ENCODE measurements at regions of chr5 and their contacts with region 1.

Region 1: DNA sequence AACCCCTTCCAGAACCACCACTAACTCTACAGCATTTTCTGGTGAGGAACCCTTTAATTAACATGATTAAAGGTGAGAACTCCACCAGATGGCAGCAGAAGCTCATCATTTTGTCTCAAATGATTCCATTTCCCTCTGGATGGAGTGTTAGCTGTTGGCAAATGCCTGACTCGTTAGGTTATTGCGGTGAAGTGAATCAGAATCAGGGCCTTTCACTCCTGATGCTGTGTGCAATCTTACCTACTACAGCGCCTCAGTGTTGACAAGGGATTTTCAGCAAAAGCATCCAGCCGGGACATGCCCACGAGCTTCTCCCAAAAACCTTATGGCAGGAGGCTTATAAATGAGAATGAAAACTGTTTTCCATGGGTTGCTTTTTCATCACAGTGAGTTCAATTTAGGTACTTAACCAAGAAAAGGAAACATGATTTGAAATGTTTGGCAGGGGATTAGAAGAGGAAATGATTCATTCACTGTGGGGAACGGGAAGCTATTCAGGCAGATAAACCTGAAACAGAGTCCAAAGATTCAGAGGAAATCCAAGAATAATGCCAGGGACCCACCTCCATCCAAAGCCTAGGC is 48.0 kb upstream of the CAST start:
- DNase-seq: peak; percentile 51
- CTCF ChIP-seq: peak; percentile 57

Region 2: DNA sequence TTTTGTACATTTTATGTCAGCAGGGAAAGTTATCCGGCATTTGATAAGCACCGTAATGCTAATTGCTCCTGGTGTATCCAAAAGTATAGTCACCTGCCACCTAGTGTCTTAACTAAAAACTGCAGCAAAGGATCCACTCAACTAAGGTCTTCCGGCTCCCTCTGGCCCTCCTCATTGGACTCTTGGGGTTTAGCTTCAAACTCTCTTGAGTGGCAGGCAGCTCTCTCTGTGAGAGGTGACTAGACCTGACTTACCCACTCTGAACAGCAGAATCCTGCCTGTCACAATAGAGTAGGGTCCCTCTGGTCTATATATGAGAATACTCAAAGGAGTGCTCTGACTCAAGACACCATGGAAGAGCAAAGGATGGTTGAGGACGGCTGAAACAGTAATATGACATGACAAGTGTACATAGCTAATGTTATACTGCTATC is 12.4 kb before region 1 on chr5:
- CTCF ChIA-PET with region 1: interaction called, 64 read pairs
- POLR2A ChIA-PET with region 1: no interaction called
- DNase-seq: peak; percentile 66
- CTCF ChIP-seq: peak; percentile 73

Region 3: GRCh38 chr5:96626956-96627355 is 12.8 kb after region 1 on chr5:
- CTCF ChIA-PET with region 1: interaction called, 24 read pairs
- POLR2A ChIA-PET with region 1: no interaction called
- DNase-seq: no peak
- CTCF ChIP-seq: no peak

Region 4: GRCh38 chr5:96687812-96688453 is 73.7 kb after region 1 on chr5:
- CTCF ChIA-PET with region 1: interaction called, 23 read pairs
- POLR2A ChIA-PET with region 1: no interaction called
- DNase-seq: peak; percentile 46
- CTCF ChIP-seq: peak; percentile 54

Region 5: GRCh38 chr5:96771395-96771794 is 157.2 kb after region 1 on chr5:
- CTCF ChIA-PET with region 1: no interaction called
- POLR2A ChIA-PET with region 1: interaction called, 10 read pairs
- DNase-seq: no peak
- CTCF ChIP-seq: no peak

Region 6: GRCh38 chr5:97142521-97143254 is 528.5 kb after region 1 on chr5 and contains the start of gene LIX1:
- CTCF ChIA-PET with region 1: interaction called, 10 read pairs
- POLR2A ChIA-PET with region 1: no interaction called
- DNase-seq: peak; percentile 48
- CTCF ChIP-seq: peak; percentile 63

Region 7: DNA sequence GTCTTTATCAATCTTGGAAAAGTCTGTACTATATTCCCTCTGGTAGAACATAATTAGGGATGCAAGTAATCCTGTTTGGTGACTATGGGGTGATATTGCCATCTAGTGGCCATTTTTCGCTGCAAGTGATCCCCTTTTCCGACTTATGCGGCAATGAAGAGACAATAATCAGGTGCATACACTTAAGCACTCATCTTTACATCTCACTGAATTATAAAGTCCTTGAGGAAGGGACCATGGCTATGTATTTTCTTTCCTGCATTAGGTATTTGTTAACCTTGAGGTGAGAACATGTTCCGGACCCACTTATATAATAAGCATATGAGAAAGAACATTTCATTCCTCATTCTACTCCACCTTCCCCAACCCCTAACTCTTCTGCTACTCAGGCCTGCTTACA is 547.8 kb after region 1 on chr5:
- CTCF ChIA-PET with region 1: interaction called, 56 read pairs
- POLR2A ChIA-PET with region 1: no interaction called
- DNase-seq: peak; percentile 15
- CTCF ChIP-seq: peak; percentile 80

Measured in GM10248 (cell line).